Caco-2 (cell line): ENCODE measurements at regions of chr12 and their contacts with region 1.

Region 1: GRCh38 chr12:6944381-6945186 is 762 bp downstream of the C12orf57 start:
- DNase-seq: peak; percentile 97
- H3K4me3 ChIP-seq: peak overlapping the region; percentile 59
- H3K4me3 Mint-ChIP-seq: peak overlapping the region; percentile 88
- H3K27ac Mint-ChIP-seq: peak overlapping the region; percentile 99
- H3K4me1 ChIP-seq: peaks cover 18% of the 10 kb centered on the region
- H3K4me1 Mint-ChIP-seq: peaks cover 40% of the 10 kb centered on the region
- H3K27me3 ChIP-seq: no peaks in the 10 kb centered on the region
- H3K27me3 Mint-ChIP-seq: peaks cover 4% of the 10 kb centered on the region
- CTCF ChIP-seq: peak; percentile 93 to 96

Region 2: GRCh38 chr12:6867413-6868210 is 77.0 kb before region 1 on chr12 and contains the start of gene TPI1:
- CTCF ChIA-PET with region 1: interaction called, 25 read pairs
- POLR2A ChIA-PET with region 1: interaction called, 50 read pairs
- intact Hi-C with region 1: loop called (anchors 2 kb)
- DNase-seq: peak; percentile 88 to 92
- H3K4me3 ChIP-seq: peak within 1 kb of the TSS; percentile 97
- H3K4me3 Mint-ChIP-seq: peak within 1 kb of the TSS; percentile 95
- H3K27ac Mint-ChIP-seq: peak within 1 kb of the TSS; percentile 94
- H3K4me1 ChIP-seq: peaks cover 31% of the 10 kb centered on the region
- H3K4me1 Mint-ChIP-seq: peaks cover 47% of the 10 kb centered on the region
- H3K27me3 ChIP-seq: no peaks in the 10 kb centered on the region
- H3K27me3 Mint-ChIP-seq: no peaks in the 10 kb centered on the region
- CTCF ChIP-seq: no peak
- total RNA-seq, gene TPI1: 1,141 and 1,254 TPM in 2 replicates

Region 3: DNA sequence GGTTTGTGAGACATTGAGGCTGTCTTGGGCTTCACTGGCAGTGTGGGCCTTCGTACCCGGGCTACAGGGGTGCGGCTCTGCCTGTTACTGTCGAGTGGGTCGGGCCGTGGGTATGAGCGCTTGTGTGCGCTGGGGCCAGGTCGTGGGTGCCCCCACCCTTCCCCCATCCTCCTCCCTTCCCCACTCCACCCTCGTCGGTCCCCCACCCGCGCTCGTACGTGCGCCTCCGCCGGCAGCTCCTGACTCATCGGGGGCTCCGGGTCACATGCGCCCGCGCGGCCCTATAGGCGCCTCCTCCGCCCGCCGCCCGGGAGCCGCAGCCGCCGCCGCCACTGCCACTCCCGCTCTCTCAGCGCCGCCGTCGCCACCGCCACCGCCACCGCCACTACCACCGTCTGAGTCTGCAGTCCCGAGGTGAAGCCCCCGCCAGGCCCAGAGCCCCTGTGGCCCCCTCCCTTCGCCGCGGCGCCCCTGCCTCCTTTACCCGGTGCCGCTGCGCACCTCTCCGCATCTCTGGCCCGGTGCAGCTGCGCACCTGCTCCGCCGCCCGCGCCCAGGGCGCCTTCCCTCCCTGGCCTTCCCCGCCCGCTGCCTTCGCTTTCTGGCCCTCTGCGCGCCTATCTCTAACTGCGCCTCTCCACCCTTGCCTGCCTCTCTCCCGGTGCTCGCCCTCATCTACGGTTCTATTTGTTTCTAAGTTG is 30.2 kb before region 1 on chr12 and contains the start of gene ENO2:
- CTCF ChIA-PET with region 1: interaction called, 4 read pairs
- POLR2A ChIA-PET with region 1: interaction called, 17 read pairs
- intact Hi-C with region 1: no loop called
- DNase-seq: peak; percentile 63 to 73
- H3K4me3 ChIP-seq: peak within 1 kb of the TSS; percentile 69
- H3K4me3 Mint-ChIP-seq: peak within 1 kb of the TSS; percentile 96
- H3K27ac Mint-ChIP-seq: no peak within 1 kb of the TSS
- H3K4me1 ChIP-seq: peaks cover 14% of the 10 kb centered on the region
- H3K4me1 Mint-ChIP-seq: peaks cover 9% of the 10 kb centered on the region
- H3K27me3 ChIP-seq: no peaks in the 10 kb centered on the region
- H3K27me3 Mint-ChIP-seq: no peaks in the 10 kb centered on the region
- CTCF ChIP-seq: no peak
- total RNA-seq, gene ENO2: 23.2 and 25.3 TPM in 2 replicates

Region 4: GRCh38 chr12:6978609-6979011 is 34.0 kb after region 1 on chr12:
- CTCF ChIA-PET with region 1: interaction called, 13 read pairs
- POLR2A ChIA-PET with region 1: interaction called, 17 read pairs
- intact Hi-C with region 1: loop called (anchors 1 kb)
- DNase-seq: peak; percentile 73 to 74
- H3K4me3 ChIP-seq: no peak overlapping the region
- H3K4me3 Mint-ChIP-seq: peak overlapping the region; percentile 17
- H3K27ac Mint-ChIP-seq: peak overlapping the region; percentile 98
- H3K4me1 ChIP-seq: peaks cover 60% of the 10 kb centered on the region
- H3K4me1 Mint-ChIP-seq: peaks cover 71% of the 10 kb centered on the region
- H3K27me3 ChIP-seq: no peaks in the 10 kb centered on the region
- H3K27me3 Mint-ChIP-seq: no peaks in the 10 kb centered on the region
- CTCF ChIP-seq: peak in 1 of 2 experiments; percentile 16

Region 5: GRCh38 chr12:7092229-7092985 is 147.8 kb after region 1 on chr12 and contains the start of gene C1R:
- CTCF ChIA-PET with region 1: interaction called, 6 read pairs
- POLR2A ChIA-PET with region 1: interaction called, 4 read pairs
- intact Hi-C with region 1: loop called (anchors 1 kb)
- DNase-seq: peak; percentile 71 to 81
- H3K4me3 ChIP-seq: peak within 1 kb of the TSS; percentile 11
- H3K4me3 Mint-ChIP-seq: peak within 1 kb of the TSS; percentile 56
- H3K27ac Mint-ChIP-seq: peak within 1 kb of the TSS; percentile 76
- H3K4me1 ChIP-seq: peaks cover 5% of the 10 kb centered on the region; the same call in 1 of the 2 replicates
- H3K4me1 Mint-ChIP-seq: no peaks in the 10 kb centered on the region
- H3K27me3 ChIP-seq: no peaks in the 10 kb centered on the region
- H3K27me3 Mint-ChIP-seq: no peaks in the 10 kb centered on the region
- CTCF ChIP-seq: peak; percentile 94 to 97
- total RNA-seq, gene C1R: 3.9 and 4.2 TPM in 2 replicates

Region 6: GRCh38 chr12:7460375-7461259 is 516.0 kb after region 1 on chr12:
- CTCF ChIA-PET with region 1: no interaction called
- POLR2A ChIA-PET with region 1: no interaction called
- intact Hi-C with region 1: no loop called
- DNase-seq: peak; percentile 64 to 82
- H3K4me3 ChIP-seq: no peak overlapping the region
- H3K4me3 Mint-ChIP-seq: no peak overlapping the region
- H3K27ac Mint-ChIP-seq: no peak overlapping the region
- H3K4me1 ChIP-seq: no peaks in the 10 kb centered on the region
- H3K4me1 Mint-ChIP-seq: no peaks in the 10 kb centered on the region
- H3K27me3 ChIP-seq: no peaks in the 10 kb centered on the region
- H3K27me3 Mint-ChIP-seq: peaks cover 4% of the 10 kb centered on the region
- CTCF ChIP-seq: peak; percentile 98 to 99